Activated CD4-positive, alpha-beta memory T cell treated with anti-CD3 and anti-CD28 coated beads, Interleukin-2, amount 10 ng/mL, durations not matched to agents 7 days and 5 days (primary cell): ENCODE measurements at regions of chr13 and their contacts with region 1.

Region 1: GRCh38 chr13:48037346-48038173 is at the start of gene NUDT15:
- DNase-seq: peak; percentile 97
- H3K4me3 Mint-ChIP-seq: peak within 1 kb of the TSS; percentile 99
- H3K27ac Mint-ChIP-seq: peak within 1 kb of the TSS; percentile 97
- H3K4me1 Mint-ChIP-seq: peaks cover 54% of the 10 kb centered on the region
- H3K27me3 Mint-ChIP-seq: no peaks in the 10 kb centered on the region
- total RNA-seq, gene NUDT15: 10.9 to 11.0 TPM

Region 2: GRCh38 chr13:48000778-48001628 is 36.6 kb before region 1 on chr13 and contains the start of gene SUCLA2:
- CTCF ChIA-PET with region 1: interaction called, 9 read pairs
- POLR2A ChIA-PET with region 1: interaction called, 19 read pairs
- DNase-seq: peak; percentile 92
- H3K4me3 Mint-ChIP-seq: peak within 1 kb of the TSS; percentile 91
- H3K27ac Mint-ChIP-seq: peak within 1 kb of the TSS; percentile 90
- H3K4me1 Mint-ChIP-seq: peaks cover 33% of the 10 kb centered on the region
- H3K27me3 Mint-ChIP-seq: no peaks in the 10 kb centered on the region
- total RNA-seq, gene SUCLA2: 26.7 to 29.1 TPM

Region 3: DNA sequence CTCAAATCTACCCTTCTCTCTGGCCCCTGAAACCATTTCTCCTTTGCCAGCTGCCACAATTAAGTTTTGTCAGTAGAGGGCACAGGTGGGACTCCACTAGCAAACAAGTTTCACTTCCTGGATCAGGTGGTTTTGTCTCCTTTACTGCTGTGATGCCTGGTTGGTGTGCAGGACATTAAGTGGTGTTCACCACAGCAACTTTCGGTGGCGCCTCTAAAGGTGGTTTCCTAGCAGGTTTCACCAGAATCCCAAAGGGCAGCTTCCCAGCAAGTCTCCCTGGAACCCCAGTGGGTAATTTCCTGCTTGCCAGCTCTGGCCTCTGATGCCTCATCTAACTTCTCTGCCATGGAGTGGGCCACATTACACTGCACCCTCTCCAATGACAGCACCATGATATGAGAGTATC is 40.7 kb after region 1 on chr13:
- CTCF ChIA-PET with region 1: interaction called, 13 read pairs
- POLR2A ChIA-PET with region 1: interaction called, 20 read pairs
- DNase-seq: peak; percentile 35
- H3K4me3 Mint-ChIP-seq: no peak overlapping the region
- H3K27ac Mint-ChIP-seq: peak overlapping the region; percentile 31
- H3K4me1 Mint-ChIP-seq: peaks cover 10% of the 10 kb centered on the region
- H3K27me3 Mint-ChIP-seq: no peaks in the 10 kb centered on the region

Region 4: DNA sequence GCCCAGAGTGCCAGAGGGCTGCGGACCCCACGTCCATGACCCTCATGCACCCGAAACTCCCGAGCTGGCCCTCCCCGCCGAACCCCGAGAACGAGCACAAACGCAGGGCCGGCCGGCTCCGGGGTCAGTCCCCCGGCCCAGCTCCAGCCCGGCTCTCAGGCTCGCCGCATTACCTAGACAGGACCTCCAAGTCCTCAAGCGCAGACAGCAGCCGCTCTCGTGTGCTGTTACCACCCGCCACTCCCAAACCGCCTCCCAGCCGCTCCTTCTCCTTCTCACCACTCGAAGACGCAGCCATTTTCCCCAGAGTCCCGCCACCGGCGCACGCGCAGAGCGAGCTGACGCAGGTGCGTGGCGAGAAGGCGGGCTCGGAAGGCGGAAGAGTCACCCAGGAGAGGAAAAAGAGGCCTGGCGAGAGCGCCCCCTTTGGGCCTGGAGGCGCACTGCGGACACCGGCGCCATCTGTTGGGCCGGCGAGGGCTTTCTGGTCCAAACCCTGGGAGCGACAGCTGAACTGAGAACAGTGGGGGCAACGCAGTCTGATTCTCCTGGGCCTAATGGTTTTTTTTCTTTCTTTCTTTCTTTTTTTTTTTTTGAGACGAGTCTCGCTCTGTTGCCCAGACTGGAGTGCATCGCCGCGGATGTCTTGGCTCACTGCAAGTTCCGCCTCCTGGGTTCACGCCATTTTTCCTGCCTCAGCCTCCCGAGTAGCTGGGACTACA is 57.4 kb after region 1 on chr13 and contains the start of gene MED4:
- CTCF ChIA-PET with region 1: interaction called, 38 read pairs
- POLR2A ChIA-PET with region 1: interaction called, 61 read pairs
- DNase-seq: peak; percentile 97
- H3K4me3 Mint-ChIP-seq: peak within 1 kb of the TSS; percentile 93
- H3K27ac Mint-ChIP-seq: peak within 1 kb of the TSS; percentile 82
- H3K4me1 Mint-ChIP-seq: peaks cover 34% of the 10 kb centered on the region
- H3K27me3 Mint-ChIP-seq: peaks cover 3% of the 10 kb centered on the region
- total RNA-seq, gene MED4: 55.2 to 61.1 TPM

Region 5: DNA sequence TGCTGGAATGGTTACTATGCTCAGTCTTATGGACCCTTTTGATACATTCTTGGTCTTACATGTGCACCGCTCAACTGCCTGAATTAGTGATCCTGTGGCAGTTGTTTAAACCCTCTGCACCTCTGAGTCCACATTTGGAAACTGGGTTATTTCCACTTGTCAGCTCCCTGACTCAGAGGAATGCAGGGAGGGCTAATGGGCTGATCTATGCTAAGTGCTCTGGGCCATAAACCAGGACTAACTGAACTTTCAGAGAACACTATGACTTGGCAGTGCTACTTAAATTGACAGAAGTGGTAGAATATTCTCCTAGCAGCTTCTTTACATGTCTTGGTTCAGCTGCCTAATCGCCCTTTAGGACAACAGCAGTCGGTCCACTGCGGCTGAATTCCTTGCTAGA is 84.2 kb after region 1 on chr13:
- CTCF ChIA-PET with region 1: no interaction called
- POLR2A ChIA-PET with region 1: no interaction called
- DNase-seq: no peak
- H3K4me3 Mint-ChIP-seq: no peak overlapping the region
- H3K27ac Mint-ChIP-seq: no peak overlapping the region
- H3K4me1 Mint-ChIP-seq: peaks cover 4% of the 10 kb centered on the region
- H3K27me3 Mint-ChIP-seq: peaks cover 3% of the 10 kb centered on the region

Region 6: GRCh38 chr13:48233046-48233907 is 195.7 kb after region 1 on chr13 and contains the start of gene ITM2B:
- CTCF ChIA-PET with region 1: interaction called, 3 read pairs
- POLR2A ChIA-PET with region 1: interaction called, 19 read pairs
- DNase-seq: peak; percentile 65
- H3K4me3 Mint-ChIP-seq: peak within 1 kb of the TSS; percentile 90
- H3K27ac Mint-ChIP-seq: peak within 1 kb of the TSS; percentile 86
- H3K4me1 Mint-ChIP-seq: peaks cover 40% of the 10 kb centered on the region
- H3K27me3 Mint-ChIP-seq: peaks cover 31% of the 10 kb centered on the region
- total RNA-seq, gene ITM2B: 226 to 227 TPM

Region 7: DNA sequence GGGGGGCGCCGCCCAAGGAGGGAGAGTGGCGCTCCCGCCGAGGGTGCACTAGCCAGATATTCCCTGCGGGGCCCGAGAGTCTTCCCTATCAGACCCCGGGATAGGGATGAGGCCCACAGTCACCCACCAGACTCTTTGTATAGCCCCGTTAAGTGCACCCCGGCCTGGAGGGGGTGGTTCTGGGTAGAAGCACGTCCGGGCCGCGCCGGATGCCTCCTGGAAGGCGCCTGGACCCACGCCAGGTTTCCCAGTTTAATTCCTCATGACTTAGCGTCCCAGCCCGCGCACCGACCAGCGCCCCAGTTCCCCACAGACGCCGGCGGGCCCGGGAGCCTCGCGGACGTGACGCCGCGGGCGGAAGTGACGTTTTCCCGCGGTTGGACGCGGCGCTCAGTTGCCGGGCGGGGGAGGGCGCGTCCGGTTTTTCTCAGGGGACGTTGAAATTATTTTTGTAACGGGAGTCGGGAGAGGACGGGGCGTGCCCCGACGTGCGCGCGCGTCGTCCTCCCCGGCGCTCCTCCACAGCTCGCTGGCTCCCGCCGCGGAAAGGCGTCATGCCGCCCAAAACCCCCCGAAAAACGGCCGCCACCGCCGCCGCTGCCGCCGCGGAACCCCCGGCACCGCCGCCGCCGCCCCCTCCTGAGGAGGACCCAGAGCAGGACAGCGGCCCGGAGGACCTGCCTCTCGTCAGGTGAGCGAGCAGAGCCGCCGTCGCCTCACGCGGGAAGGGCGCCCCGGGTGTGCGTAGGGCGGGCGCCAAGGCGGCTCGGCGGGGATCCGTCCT is 266.0 kb after region 1 on chr13 and contains the start of gene RB1:
- CTCF ChIA-PET with region 1: no interaction called
- POLR2A ChIA-PET with region 1: interaction called, 11 read pairs
- DNase-seq: peak; percentile 93
- H3K4me3 Mint-ChIP-seq: peak within 1 kb of the TSS; percentile 95
- H3K27ac Mint-ChIP-seq: peak within 1 kb of the TSS; percentile 92
- H3K4me1 Mint-ChIP-seq: peaks cover 28% of the 10 kb centered on the region
- H3K27me3 Mint-ChIP-seq: no peaks in the 10 kb centered on the region
- total RNA-seq, gene RB1: 40.2 to 41.3 TPM

Region 8: DNA sequence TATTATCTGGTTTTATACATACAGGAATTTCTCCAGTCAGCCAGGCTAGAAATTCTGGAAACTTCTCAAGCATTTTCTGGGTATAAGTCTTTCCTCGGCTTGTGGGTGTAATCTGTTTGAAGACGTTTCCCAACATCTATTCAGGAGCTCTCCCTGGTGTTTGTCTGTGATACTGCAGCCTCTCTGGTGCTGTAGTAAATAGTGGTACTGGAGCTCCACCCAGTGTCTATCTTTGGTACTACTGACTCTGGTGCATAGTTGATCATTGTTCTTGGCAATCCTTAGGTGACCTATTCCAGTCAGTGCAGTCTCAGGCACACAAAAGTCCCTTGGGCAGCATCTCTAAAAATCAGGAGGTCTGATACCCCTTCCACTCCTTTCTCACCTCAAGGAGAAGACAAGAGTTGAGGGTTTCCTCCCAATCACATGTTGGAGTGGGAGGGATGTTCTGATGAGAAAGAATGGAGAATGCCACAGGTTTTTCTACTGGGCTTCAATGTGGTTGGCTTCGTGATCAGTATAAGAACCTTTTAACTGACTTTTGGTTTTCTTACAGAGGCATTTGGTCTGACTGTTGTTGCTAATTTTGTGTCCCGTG is 731.6 kb after region 1 on chr13:
- CTCF ChIA-PET with region 1: interaction called, 14 read pairs
- POLR2A ChIA-PET with region 1: no interaction called
- DNase-seq: peak; percentile 84
- H3K4me3 Mint-ChIP-seq: no peak overlapping the region
- H3K27ac Mint-ChIP-seq: no peak overlapping the region
- H3K4me1 Mint-ChIP-seq: peaks cover 37% of the 10 kb centered on the region
- H3K27me3 Mint-ChIP-seq: peaks cover 33% of the 10 kb centered on the region